ENCODE measurements at regions of chr5 and their contacts with region 1.

Region 1: GRCh38 chr5:40736103-40736875 is 19.5 kb downstream of the TTC33 start:
- DNase-seq: peak in 4 of 5 donors; percentile 51 to 62 (median 57)
- H3K4me3 ChIP-seq: no peak overlapping the region
- H3K4me3 Mint-ChIP-seq: no peak overlapping the region
- H3K27ac ChIP-seq: no peak overlapping the region
- H3K27ac Mint-ChIP-seq: peak overlapping the region in 3 of 7 donors; percentile 23 to 65 (median 24)
- H3K4me1 ChIP-seq: no peaks in the 10 kb centered on the region
- H3K4me1 Mint-ChIP-seq: peaks cover 11 to 20% (median 17%) of the 10 kb centered on the region in 4 donors
- H3K27me3 ChIP-seq: no peaks in the 10 kb centered on the region
- H3K27me3 Mint-ChIP-seq: no peaks in the 10 kb centered on the region

Region 2: GRCh38 chr5:39578887-39579497 is 1157.3 kb before region 1 on chr5:
- CTCF ChIA-PET with region 1: interaction called, 3 read pairs
- POLR2A ChIA-PET with region 1: no interaction called
- intact Hi-C with region 1: loop called (anchors 2 kb)
- DNase-seq: peak in 4 of 5 donors; percentile 15 to 26 (median 19)
- H3K4me3 ChIP-seq: no peak overlapping the region
- H3K4me3 Mint-ChIP-seq: peak overlapping the region in 1 of 8 donors; percentile 32
- H3K27ac ChIP-seq: no peak overlapping the region
- H3K27ac Mint-ChIP-seq: no peak overlapping the region
- H3K4me1 ChIP-seq: peaks cover 10% of the 10 kb centered on the region
- H3K4me1 Mint-ChIP-seq: peaks cover 4 to 11% (median 6%) of the 10 kb centered on the region in 4 donors
- H3K27me3 ChIP-seq: no peaks in the 10 kb centered on the region
- H3K27me3 Mint-ChIP-seq: peaks cover 0 to 2% of the 10 kb centered on the region in 2 donors

Region 3: GRCh38 chr5:39948867-39949468 is 787.3 kb before region 1 on chr5:
- CTCF ChIA-PET with region 1: interaction called, 25 read pairs
- POLR2A ChIA-PET with region 1: no interaction called
- intact Hi-C with region 1: loop called (anchors 1 kb)
- DNase-seq: peak; percentile 64 to 69 (median 66)
- H3K4me3 ChIP-seq: no peak overlapping the region
- H3K4me3 Mint-ChIP-seq: no peak overlapping the region
- H3K27ac ChIP-seq: no peak overlapping the region
- H3K27ac Mint-ChIP-seq: no peak overlapping the region
- H3K4me1 ChIP-seq: no peaks in the 10 kb centered on the region
- H3K4me1 Mint-ChIP-seq: peaks cover 0 to 5% (median 2%) of the 10 kb centered on the region in 4 donors
- H3K27me3 ChIP-seq: no peaks in the 10 kb centered on the region
- H3K27me3 Mint-ChIP-seq: no peaks in the 10 kb centered on the region

Region 4: GRCh38 chr5:40165794-40166728 is 570.2 kb before region 1 on chr5:
- CTCF ChIA-PET with region 1: no interaction called
- POLR2A ChIA-PET with region 1: no interaction called
- intact Hi-C with region 1: loop called (anchors 1 kb)
- DNase-seq: peak in 4 of 5 donors; percentile 13 to 33 (median 16)
- H3K4me3 ChIP-seq: no peak overlapping the region
- H3K4me3 Mint-ChIP-seq: no peak overlapping the region
- H3K27ac ChIP-seq: no peak overlapping the region
- H3K27ac Mint-ChIP-seq: no peak overlapping the region
- H3K4me1 ChIP-seq: no peaks in the 10 kb centered on the region
- H3K4me1 Mint-ChIP-seq: peaks cover 0 to 1% (median 0%) of the 10 kb centered on the region in 4 donors
- H3K27me3 ChIP-seq: no peaks in the 10 kb centered on the region
- H3K27me3 Mint-ChIP-seq: no peaks in the 10 kb centered on the region

Region 5: GRCh38 chr5:40720069-40720468 is 16.2 kb before region 1 on chr5:
- CTCF ChIA-PET with region 1: interaction called, 10 read pairs
- POLR2A ChIA-PET with region 1: no interaction called
- intact Hi-C with region 1: no loop called
- DNase-seq: no peak
- H3K4me3 ChIP-seq: no peak overlapping the region
- H3K4me3 Mint-ChIP-seq: no peak overlapping the region
- H3K27ac ChIP-seq: no peak overlapping the region
- H3K27ac Mint-ChIP-seq: no peak overlapping the region
- H3K4me1 ChIP-seq: no peaks in the 10 kb centered on the region
- H3K4me1 Mint-ChIP-seq: peaks cover 4 to 7% (median 6%) of the 10 kb centered on the region in 4 donors
- H3K27me3 ChIP-seq: no peaks in the 10 kb centered on the region
- H3K27me3 Mint-ChIP-seq: no peaks in the 10 kb centered on the region